Transverse colon (tissue), 4 donors: ENCODE measurements at regions of chr1 and their contacts with region 1.

Region 1: DNA sequence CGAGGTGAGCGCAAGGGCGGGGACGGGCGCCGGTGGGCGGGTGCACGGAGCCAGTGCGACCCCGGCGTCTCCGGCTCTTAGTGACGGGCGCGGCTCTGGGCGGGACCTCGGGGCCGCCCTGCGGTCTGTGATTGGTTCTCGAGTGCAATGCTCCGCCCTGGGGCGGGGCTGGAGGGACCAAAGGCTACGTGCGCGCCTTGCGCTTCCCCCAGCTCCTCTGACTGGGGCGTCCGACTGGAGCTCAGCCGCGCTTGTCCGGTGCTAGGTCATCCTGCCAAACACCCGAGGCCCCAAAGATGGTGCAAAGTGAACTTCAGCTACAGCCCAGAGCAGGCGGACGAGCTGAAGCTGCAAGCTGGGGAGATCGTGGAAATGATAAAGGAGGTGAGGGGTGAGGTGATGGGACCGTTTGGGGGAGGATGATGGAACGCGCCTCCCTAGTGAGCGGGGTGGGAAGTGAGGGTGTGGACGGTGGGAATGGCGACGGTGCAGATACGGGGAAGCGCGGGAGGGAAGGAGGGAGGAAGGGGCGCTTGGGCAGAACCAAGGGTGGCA is 811 bp downstream of the SH3D21 start:
- DNase-seq: peak; percentile 96
- H3K4me3 ChIP-seq: peak overlapping the region; percentile 45 to 84 (median 76)
- H3K27ac ChIP-seq: peak overlapping the region; percentile 85 to 96 (median 92)
- H3K4me1 ChIP-seq: peaks cover 11 to 20% (median 17%) of the 10 kb centered on the region in 4 donors
- H3K27me3 ChIP-seq: no peaks in the 10 kb centered on the region
- CTCF ChIP-seq: no peak
- EP300 ChIP-seq: no peak
- POLR2A ChIP-seq: peak; percentile 67

Region 2: GRCh38 chr1:35519432-35519831 is 787.5 kb before region 1 on chr1:
- in situ Hi-C with region 1: no loop called
- intact Hi-C with region 1: loop called (anchors 5 kb)
- DNase-seq: no peak
- H3K4me3 ChIP-seq: no peak overlapping the region
- H3K27ac ChIP-seq: no peak overlapping the region
- H3K4me1 ChIP-seq: no peaks in the 10 kb centered on the region
- H3K27me3 ChIP-seq: no peaks in the 10 kb centered on the region
- CTCF ChIP-seq: no peak
- EP300 ChIP-seq: no peak
- POLR2A ChIP-seq: no peak

Region 3: GRCh38 chr1:36258962-36259349 is 48.0 kb before region 1 on chr1:
- in situ Hi-C with region 1: no loop called
- intact Hi-C with region 1: loop called (anchors 1 kb)
- DNase-seq: no peak
- H3K4me3 ChIP-seq: no peak overlapping the region
- H3K27ac ChIP-seq: no peak overlapping the region
- H3K4me1 ChIP-seq: peaks cover 14 to 37% (median 20%) of the 10 kb centered on the region in 4 donors
- H3K27me3 ChIP-seq: no peaks in the 10 kb centered on the region
- CTCF ChIP-seq: no peak
- EP300 ChIP-seq: no peak
- POLR2A ChIP-seq: no peak